HEK293 (cell line): ENCODE measurements at regions of chr6 and their contacts with region 1.

Region 1: DNA sequence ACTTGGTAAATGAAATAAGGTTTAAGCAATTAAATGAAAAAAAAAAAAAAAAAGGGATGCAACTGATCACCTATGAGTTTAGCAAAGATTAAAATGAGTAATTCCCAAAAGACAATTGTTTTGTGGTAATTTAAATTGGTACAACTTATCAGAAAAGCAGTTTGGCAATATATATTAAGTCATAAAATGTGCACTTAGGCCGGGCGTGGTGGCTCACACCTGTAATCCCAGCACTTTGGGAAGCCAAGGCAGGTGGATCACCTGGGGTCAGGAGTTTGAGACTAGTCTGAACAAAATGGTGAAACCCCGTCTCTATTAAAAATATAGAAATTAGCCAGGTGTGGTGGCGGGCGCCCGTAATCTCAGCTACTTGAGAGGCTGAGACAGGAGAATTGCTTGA is 7.9 kb downstream of the PHACTR2 start:
- H3K4me3 ChIP-seq: no peak overlapping the region
- H3K27ac ChIP-seq: no peak overlapping the region
- H3K4me1 ChIP-seq: no peaks in the 10 kb centered on the region
- CTCF ChIP-seq: no peak

Region 2: GRCh38 chr6:143718472-143718871 is 32.8 kb after region 1 on chr6:
- CTCF ChIA-PET with region 1: no interaction called
- POLR2A ChIA-PET with region 1: no interaction called
- H3K4me3 ChIP-seq: no peak overlapping the region
- H3K27ac ChIP-seq: no peak overlapping the region
- H3K4me1 ChIP-seq: no peaks in the 10 kb centered on the region
- CTCF ChIP-seq: no peak

Region 3: GRCh38 chr6:143842902-143843676 is 157.4 kb after region 1 on chr6 and contains the start of gene LTV1:
- CTCF ChIA-PET with region 1: no interaction called
- POLR2A ChIA-PET with region 1: interaction called, 13 read pairs
- H3K4me3 ChIP-seq: peak within 1 kb of the TSS; percentile 97
- H3K27ac ChIP-seq: peak within 1 kb of the TSS; percentile 72
- H3K4me1 ChIP-seq: no peaks in the 10 kb centered on the region
- CTCF ChIP-seq: no peak